ENCODE measurements at regions of chr1 and their contacts with region 1.

Region 1: GRCh38 chr1:162035241-162035640 is 11.6 kb upstream of the OLFML2B start:
- DNase-seq: no peak
- ATAC-seq: peak; percentile 54; the same call in 1 of the 2 replicates
- H3K4me3 ChIP-seq: peak overlapping the region in 1 of 2 experiments; percentile 10; a peak in 1 of 4 replicates
- H3K27ac ChIP-seq: no peak overlapping the region
- H3K4me1 ChIP-seq: peaks cover 13 to 25% of the 10 kb centered on the region in 2 experiments
- H3K27me3 ChIP-seq: no peaks in the 10 kb centered on the region
- CTCF ChIP-seq: no peak
- POLR2A ChIP-seq: no peak
- RAD21 ChIP-seq: no peak

Region 2: DNA sequence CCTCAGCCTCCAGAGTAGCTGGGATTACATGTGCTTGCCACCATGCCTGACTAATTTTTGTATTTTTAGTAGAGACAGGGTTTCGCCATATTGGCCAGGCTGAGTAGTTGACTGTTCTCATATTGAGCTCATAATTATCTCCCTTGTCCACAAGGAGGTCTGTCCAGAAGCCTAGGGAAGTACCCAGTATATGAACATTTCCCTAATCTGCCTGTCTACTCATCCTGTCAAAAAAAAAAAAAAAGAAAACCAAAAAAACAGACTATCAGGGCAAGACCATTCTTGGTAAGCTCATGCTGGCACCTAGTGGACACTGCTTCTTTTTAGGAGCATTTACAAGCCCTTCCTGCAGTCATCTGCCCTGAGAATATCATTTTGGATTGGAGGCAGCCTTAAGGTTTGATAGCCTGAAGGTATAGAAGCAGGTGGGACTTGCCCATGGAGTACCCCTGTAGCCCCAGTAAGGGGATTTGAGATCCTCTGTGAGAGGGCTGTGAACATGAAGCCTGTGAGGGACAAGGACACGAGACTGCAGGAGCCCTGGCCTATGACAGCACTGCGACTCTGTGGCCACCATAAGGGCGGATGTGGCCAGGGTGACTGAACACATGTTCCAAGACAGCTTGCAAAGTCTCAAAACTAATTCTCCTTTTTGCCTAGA is 296.5 kb before region 1 on chr1:
- CTCF ChIA-PET with region 1: interaction called, 12 read pairs
- POLR2A ChIA-PET with region 1: no interaction called
- RAD21 ChIA-PET with region 1: interaction called in 1 of 2 experiments, 4 read pairs
- intact Hi-C with region 1: no loop called
- DNase-seq: peak; percentile 76
- ATAC-seq: peak; percentile 73
- H3K4me3 ChIP-seq: no peak overlapping the region
- H3K27ac ChIP-seq: no peak overlapping the region
- H3K4me1 ChIP-seq: peaks cover 0 to 24% of the 10 kb centered on the region in 2 experiments; a peak in 2 of 4 replicates
- H3K27me3 ChIP-seq: no peaks in the 10 kb centered on the region
- CTCF ChIP-seq: peak; percentile 49 to 90 (median 64); a peak in 5 of 6 replicates
- POLR2A ChIP-seq: no peak
- RAD21 ChIP-seq: peak; percentile 96

Region 3: GRCh38 chr1:161749509-161750407 is 285.5 kb before region 1 on chr1 and contains the start of gene DUSP12:
- CTCF ChIA-PET with region 1: interaction called, 11 read pairs
- POLR2A ChIA-PET with region 1: no interaction called
- RAD21 ChIA-PET with region 1: no interaction called
- intact Hi-C with region 1: no loop called
- DNase-seq: peak; percentile 90
- ATAC-seq: peak; percentile 93
- H3K4me3 ChIP-seq: peak within 1 kb of the TSS; percentile 90 to 92
- H3K27ac ChIP-seq: peak within 1 kb of the TSS; percentile 78
- H3K4me1 ChIP-seq: peaks cover 8 to 16% of the 10 kb centered on the region in 2 experiments; a peak in 3 of 4 replicates
- H3K27me3 ChIP-seq: no peaks in the 10 kb centered on the region
- CTCF ChIP-seq: 0 out of 6 replicates have a peak, but pooled peaks of 2 of the 3 experiments have one; percentile 1 to 10
- POLR2A ChIP-seq: peak; percentile 80
- RAD21 ChIP-seq: no peak
- total RNA-seq, gene DUSP12: 31.6 TPM

Region 4: GRCh38 chr1:161766102-161766981 is 268.9 kb before region 1 on chr1 and contains the start of gene ATF6:
- CTCF ChIA-PET with region 1: interaction called, 31 read pairs
- POLR2A ChIA-PET with region 1: interaction called, 4 read pairs
- RAD21 ChIA-PET with region 1: interaction called in 1 of 2 experiments, 5 read pairs
- intact Hi-C with region 1: loop called (anchors 1 kb)
- DNase-seq: peak; percentile 92
- ATAC-seq: peak; percentile 61
- H3K4me3 ChIP-seq: peak within 1 kb of the TSS; percentile 63 to 97
- H3K27ac ChIP-seq: peak within 1 kb of the TSS; percentile 46
- H3K4me1 ChIP-seq: peaks cover 13 to 31% of the 10 kb centered on the region in 2 experiments; a peak in 3 of 4 replicates
- H3K27me3 ChIP-seq: no peaks in the 10 kb centered on the region
- CTCF ChIP-seq: no peak
- POLR2A ChIP-seq: no peak
- RAD21 ChIP-seq: no peak
- total RNA-seq, gene ATF6: 20.9 TPM

Region 5: GRCh38 chr1:161792740-161793139 is 242.5 kb before region 1 on chr1:
- CTCF ChIA-PET with region 1: interaction called, 295 read pairs
- POLR2A ChIA-PET with region 1: interaction called, 13 read pairs
- RAD21 ChIA-PET with region 1: interaction called, 28 to 39 read pairs
- intact Hi-C with region 1: loop called (anchors 1 kb)
- DNase-seq: peak; percentile 49
- ATAC-seq: peak; percentile 86
- H3K4me3 ChIP-seq: no peak overlapping the region
- H3K27ac ChIP-seq: no peak overlapping the region
- H3K4me1 ChIP-seq: peaks cover 0 to 4% of the 10 kb centered on the region in 2 experiments; a peak in 2 of 4 replicates
- H3K27me3 ChIP-seq: no peaks in the 10 kb centered on the region
- CTCF ChIP-seq: peak; percentile 45 to 80 (median 65)
- POLR2A ChIP-seq: no peak
- RAD21 ChIP-seq: peak; percentile 81

Region 6: GRCh38 chr1:162023547-162024501 is 11.4 kb before region 1 on chr1 and contains the start of gene OLFML2B:
- CTCF ChIA-PET with region 1: interaction called, 21 read pairs
- POLR2A ChIA-PET with region 1: interaction called, 4 read pairs
- RAD21 ChIA-PET with region 1: interaction called, 3 to 5 read pairs
- intact Hi-C with region 1: no loop called
- DNase-seq: peak; percentile 38
- ATAC-seq: peak; percentile 96
- H3K4me3 ChIP-seq: peak within 1 kb of the TSS; percentile 70 to 82
- H3K27ac ChIP-seq: no peak within 1 kb of the TSS; the same call in 1 of the 2 replicates
- H3K4me1 ChIP-seq: peaks cover 9 to 17% of the 10 kb centered on the region in 2 experiments
- H3K27me3 ChIP-seq: no peaks in the 10 kb centered on the region
- CTCF ChIP-seq: peak in 2 of 3 experiments; percentile 17 to 21; a peak in 3 of 6 replicates
- POLR2A ChIP-seq: no peak
- RAD21 ChIP-seq: peak; percentile 59
- total RNA-seq, gene OLFML2B: 1.3 TPM

Measured in HCT116 (cell line).